ENCODE measurements at regions of chrX and their contacts with region 1.

Region 1: GRCh38 chrX:17535229-17535628 is 160.2 kb downstream of the NHS start:
- DNase-seq: peak; percentile 69
- H3K4me3 Mint-ChIP-seq: no peak overlapping the region
- H3K27ac Mint-ChIP-seq: no peak overlapping the region
- H3K4me1 Mint-ChIP-seq: peaks cover 17% of the 10 kb centered on the region
- H3K27me3 Mint-ChIP-seq: no peaks in the 10 kb centered on the region

Region 2: GRCh38 chrX:17242470-17242869 is 292.8 kb before region 1 on chrX:
- CTCF ChIA-PET with region 1: interaction called, 5 read pairs
- POLR2A ChIA-PET with region 1: no interaction called
- intact Hi-C with region 1: loop called (anchors 2 kb)
- DNase-seq: peak; percentile 23
- H3K4me3 Mint-ChIP-seq: no peak overlapping the region
- H3K27ac Mint-ChIP-seq: no peak overlapping the region
- H3K4me1 Mint-ChIP-seq: no peaks in the 10 kb centered on the region
- H3K27me3 Mint-ChIP-seq: no peaks in the 10 kb centered on the region

Region 3: DNA sequence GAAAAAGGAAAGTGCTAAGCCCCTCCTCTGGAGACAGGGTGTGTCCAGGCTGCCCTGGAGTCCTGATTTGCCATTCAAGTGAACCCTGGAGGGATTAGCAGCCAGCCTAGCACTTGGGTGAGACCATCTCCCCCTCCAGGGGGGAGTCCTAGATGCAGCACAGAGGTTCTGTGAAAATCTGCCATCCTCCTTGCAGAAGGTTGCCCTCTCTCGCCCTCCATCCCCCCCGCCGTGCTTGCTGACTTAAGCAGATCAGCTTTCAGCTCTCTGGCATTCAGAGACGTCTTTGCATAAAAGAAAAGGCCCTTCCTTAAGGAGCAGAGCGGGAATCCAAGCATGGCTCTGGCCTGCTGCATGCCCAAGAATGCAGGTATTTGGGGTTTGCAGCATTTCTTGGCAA is 100.0 kb after region 1 on chrX:
- CTCF ChIA-PET with region 1: no interaction called
- POLR2A ChIA-PET with region 1: no interaction called
- intact Hi-C with region 1: no loop called
- DNase-seq: no peak
- H3K4me3 Mint-ChIP-seq: no peak overlapping the region
- H3K27ac Mint-ChIP-seq: no peak overlapping the region
- H3K4me1 Mint-ChIP-seq: peaks cover 14% of the 10 kb centered on the region
- H3K27me3 Mint-ChIP-seq: no peaks in the 10 kb centered on the region